ENCODE measurements at regions of chr16 and their contacts with region 1.

Region 1: GRCh38 chr16:24721830-24722238 is 7.6 kb upstream of the TNRC6A start:
- DNase-seq: peak; percentile 81
- ATAC-seq: peak; percentile 90
- H3K4me3 Mint-ChIP-seq: no peak overlapping the region
- H3K27ac Mint-ChIP-seq: peak overlapping the region; percentile 6
- H3K4me1 Mint-ChIP-seq: peaks cover 29% of the 10 kb centered on the region
- H3K27me3 Mint-ChIP-seq: peaks cover 2% of the 10 kb centered on the region

Region 2: GRCh38 chr16:23949630-23950290 is 772.1 kb before region 1 on chr16:
- CTCF ChIA-PET with region 1: no interaction called
- POLR2A ChIA-PET with region 1: no interaction called
- intact Hi-C with region 1: no loop called
- DNase-seq: peak; percentile 71
- ATAC-seq: no peak
- H3K4me3 Mint-ChIP-seq: peak overlapping the region; percentile 11
- H3K27ac Mint-ChIP-seq: peak overlapping the region; percentile 81
- H3K4me1 Mint-ChIP-seq: peaks cover 92% of the 10 kb centered on the region
- H3K27me3 Mint-ChIP-seq: no peaks in the 10 kb centered on the region

Region 3: DNA sequence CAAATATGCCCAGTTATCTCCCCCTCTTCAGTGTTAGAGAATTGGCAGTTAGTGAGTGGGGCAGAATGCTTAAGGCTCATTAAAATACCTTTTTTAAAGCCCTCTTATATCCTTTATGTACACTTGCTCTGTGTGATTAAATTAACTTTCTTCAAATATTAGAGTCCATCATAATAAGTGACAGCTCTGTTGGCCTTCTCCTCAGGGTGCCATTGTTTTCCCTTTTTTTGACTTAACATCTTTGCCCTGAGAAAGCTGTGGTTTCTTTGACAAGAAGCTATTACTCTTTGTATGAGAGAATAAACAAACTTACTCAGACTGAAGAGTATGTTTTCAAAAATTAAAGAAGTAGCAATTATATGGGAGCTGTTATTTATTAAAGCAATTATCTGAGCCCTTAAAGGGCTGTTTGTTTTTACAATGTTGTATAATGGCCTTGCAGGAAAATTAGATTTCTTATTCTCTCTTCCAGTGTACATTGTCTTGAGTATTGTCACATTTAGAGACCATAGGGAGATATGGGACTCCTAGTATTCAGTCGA is 169.1 kb before region 1 on chr16:
- CTCF ChIA-PET with region 1: no interaction called
- POLR2A ChIA-PET with region 1: no interaction called
- intact Hi-C with region 1: no loop called
- DNase-seq: no peak
- ATAC-seq: no peak
- H3K4me3 Mint-ChIP-seq: no peak overlapping the region
- H3K27ac Mint-ChIP-seq: no peak overlapping the region
- H3K4me1 Mint-ChIP-seq: peaks cover 28% of the 10 kb centered on the region
- H3K27me3 Mint-ChIP-seq: no peaks in the 10 kb centered on the region

Region 4: GRCh38 chr16:24753437-24753836 is 31.6 kb after region 1 on chr16:
- CTCF ChIA-PET with region 1: interaction called, 4 read pairs
- POLR2A ChIA-PET with region 1: no interaction called
- intact Hi-C with region 1: loop called in 1 of 2 experiments (anchors 5 kb)
- DNase-seq: peak; percentile 48
- ATAC-seq: peak; percentile 95
- H3K4me3 Mint-ChIP-seq: peak overlapping the region; percentile 38
- H3K27ac Mint-ChIP-seq: peak overlapping the region; percentile 88
- H3K4me1 Mint-ChIP-seq: peaks cover 64% of the 10 kb centered on the region
- H3K27me3 Mint-ChIP-seq: no peaks in the 10 kb centered on the region

Region 5: DNA sequence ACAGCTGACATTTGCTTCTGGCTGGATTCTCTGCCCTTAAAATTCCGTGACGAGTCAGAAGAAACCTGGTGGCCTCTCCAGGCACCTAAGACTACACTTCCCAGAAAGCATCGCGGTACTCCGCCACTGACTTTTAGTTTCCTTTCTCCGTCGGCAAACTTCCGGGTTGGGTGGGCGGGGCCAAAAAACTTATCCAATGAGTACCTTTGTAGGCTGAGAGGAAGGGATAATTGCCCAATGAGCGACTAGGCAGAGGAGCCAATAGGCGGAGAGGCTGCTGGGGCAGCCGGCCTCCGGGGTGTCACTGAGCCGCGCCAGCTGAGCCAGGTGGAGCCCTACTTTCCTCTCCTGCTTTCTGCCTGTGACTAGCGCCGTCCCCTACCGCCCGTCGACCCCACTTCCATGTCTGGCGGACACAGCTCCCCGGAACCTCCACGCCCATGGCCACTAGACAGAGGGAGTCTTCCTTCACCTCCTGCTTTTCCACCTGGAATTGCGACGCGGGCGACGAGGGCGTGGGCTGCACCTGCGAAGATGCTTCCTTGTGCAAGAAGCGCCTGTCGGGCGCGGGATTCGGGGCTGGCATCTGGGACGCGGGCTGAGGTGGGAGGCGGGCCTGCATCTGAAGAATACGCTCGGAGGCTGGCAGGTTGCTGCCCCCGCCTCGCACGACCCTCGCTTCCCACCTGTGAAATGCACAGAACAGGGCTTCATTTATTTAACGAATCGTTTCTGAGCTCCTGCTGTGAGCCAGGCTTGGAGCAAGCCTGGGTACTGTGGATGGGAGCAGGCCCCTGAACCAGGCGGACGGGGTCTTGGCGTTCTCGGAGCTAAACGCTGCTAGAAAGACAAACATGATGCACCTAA is 309.8 kb after region 1 on chr16:
- CTCF ChIA-PET with region 1: no interaction called
- POLR2A ChIA-PET with region 1: no interaction called
- intact Hi-C with region 1: no loop called
- DNase-seq: peak; percentile 93
- ATAC-seq: peak; percentile 97
- H3K4me3 Mint-ChIP-seq: peak overlapping the region; percentile 75
- H3K27ac Mint-ChIP-seq: peak overlapping the region; percentile 100
- H3K4me1 Mint-ChIP-seq: peaks cover 46% of the 10 kb centered on the region
- H3K27me3 Mint-ChIP-seq: no peaks in the 10 kb centered on the region